Mammary epithelial cell (primary cell): ENCODE measurements at regions of chr4 and their contacts with region 1.

Region 1: DNA sequence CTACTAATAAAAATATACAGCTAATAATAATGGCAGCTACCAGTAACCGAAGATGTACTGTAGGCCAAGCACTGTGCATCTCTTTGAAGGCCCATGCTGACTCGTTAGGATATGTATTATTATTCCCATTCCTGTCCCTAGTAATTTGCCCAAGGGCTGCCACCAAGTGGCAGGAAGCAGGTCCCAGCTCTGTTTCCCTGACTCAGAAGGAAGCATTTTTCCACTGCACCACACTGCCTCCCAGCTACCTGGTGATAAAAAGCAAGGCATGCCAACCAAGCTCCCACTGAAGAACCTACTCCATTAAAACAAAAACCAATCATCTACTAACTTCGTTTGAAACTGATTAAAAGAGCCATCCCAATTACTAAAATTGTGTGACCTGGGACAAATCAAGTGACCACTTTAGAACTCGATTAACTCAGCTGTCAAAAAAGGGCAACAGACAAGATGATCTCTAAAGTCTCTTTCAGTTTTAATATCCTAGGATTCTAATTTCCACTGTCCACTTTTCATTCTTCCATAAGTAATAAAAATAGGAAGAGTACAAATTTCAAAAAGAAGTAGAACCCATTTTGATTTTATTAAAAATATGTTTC is 24.3 kb upstream of the PGM2 start:
- DNase-seq: peak; percentile 69
- H3K4me3 ChIP-seq: no peak overlapping the region
- H3K27ac ChIP-seq: no peak overlapping the region
- H3K4me1 ChIP-seq: no peaks in the 10 kb centered on the region
- H3K27me3 ChIP-seq: no peaks in the 10 kb centered on the region
- CTCF ChIP-seq: peak; percentile 66 to 83

Region 2: DNA sequence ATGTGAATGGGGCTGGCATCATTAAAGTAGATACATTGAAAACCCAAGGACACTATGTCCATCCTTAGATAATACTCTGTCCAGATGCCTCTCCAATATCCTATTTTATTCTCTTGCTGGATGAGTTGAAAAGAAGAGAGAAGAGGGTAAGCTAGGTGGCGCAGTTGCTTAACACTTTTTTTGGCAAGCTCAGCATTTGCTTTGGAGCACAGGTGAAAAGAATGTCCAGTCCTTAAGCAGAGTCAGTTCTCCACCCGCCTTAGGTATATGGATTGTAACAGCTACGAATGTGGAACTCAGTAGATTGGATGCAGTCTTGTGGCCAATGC is 349.3 kb before region 1 on chr4:
- CTCF ChIA-PET with region 1: interaction called, 4 read pairs
- dilution Hi-C with region 1: no loop called
- in situ Hi-C with region 1: loop called (anchors 10 to 25 kb)
- intact Hi-C with region 1: no loop called
- DNase-seq: peak; percentile 64
- H3K4me3 ChIP-seq: no peak overlapping the region
- H3K27ac ChIP-seq: no peak overlapping the region
- H3K4me1 ChIP-seq: peaks cover 9% of the 10 kb centered on the region
- H3K27me3 ChIP-seq: peaks cover 18% of the 10 kb centered on the region
- CTCF ChIP-seq: peak; percentile 60 to 80

Region 3: GRCh38 chr4:37742149-37742548 is 60.0 kb before region 1 on chr4:
- CTCF ChIA-PET with region 1: no interaction called
- dilution Hi-C with region 1: no loop called
- in situ Hi-C with region 1: no loop called
- intact Hi-C with region 1: loop called (anchors 2 kb)
- DNase-seq: peak; percentile 26
- H3K4me3 ChIP-seq: no peak overlapping the region
- H3K27ac ChIP-seq: no peak overlapping the region
- H3K4me1 ChIP-seq: peaks cover 4% of the 10 kb centered on the region
- H3K27me3 ChIP-seq: no peaks in the 10 kb centered on the region
- CTCF ChIP-seq: peak; percentile 15 to 37

Region 4: DNA sequence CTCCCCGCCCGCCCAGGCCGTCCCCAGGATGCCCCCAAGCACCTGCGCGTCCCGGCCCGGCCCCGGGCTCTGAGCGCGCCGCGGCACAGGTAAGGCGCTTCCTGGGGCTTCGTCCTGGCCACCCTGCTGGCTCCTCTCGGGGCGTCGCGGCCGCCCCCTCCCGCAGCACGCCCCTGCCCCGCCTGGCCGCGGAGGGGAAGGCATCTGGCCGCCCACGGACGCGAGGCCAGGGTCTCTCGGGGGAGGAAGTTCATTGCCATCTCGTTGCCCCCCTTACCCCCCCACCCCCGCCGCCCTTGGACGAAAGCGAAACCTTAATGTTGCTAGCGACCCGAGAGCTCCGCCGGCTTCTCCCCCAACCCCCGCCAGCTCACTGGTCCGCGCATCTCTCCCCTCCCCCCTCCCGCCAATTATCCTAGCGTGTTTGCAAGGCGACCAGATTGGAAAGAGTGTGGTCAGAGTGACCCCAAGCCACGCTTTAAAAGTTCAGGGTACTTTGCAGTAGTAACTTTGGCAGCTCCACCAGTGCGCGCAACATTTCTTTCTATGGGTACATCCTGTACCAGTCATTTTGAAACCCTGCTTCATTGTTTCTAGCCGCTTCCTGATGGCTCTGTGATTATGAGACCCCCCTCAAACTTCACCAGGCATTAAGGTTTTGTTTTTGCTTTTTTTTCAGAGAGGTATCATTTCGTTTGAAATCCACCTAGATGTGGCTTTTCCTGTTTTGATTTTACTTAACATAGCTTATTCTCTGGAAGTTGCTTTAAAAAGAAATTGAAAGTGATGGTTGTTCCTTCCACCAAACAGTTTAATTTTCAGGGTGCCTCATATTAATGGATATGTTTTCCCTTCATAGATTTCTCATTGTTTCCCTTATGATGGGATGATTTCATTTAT is 89.3 kb after region 1 on chr4:
- CTCF ChIA-PET with region 1: no interaction called
- dilution Hi-C with region 1: no loop called
- in situ Hi-C with region 1: no loop called
- intact Hi-C with region 1: loop called (anchors 2 kb)
- DNase-seq: peak; percentile 5
- H3K4me3 ChIP-seq: peak overlapping the region; percentile 52 to 57 (median 55)
- H3K27ac ChIP-seq: no peak overlapping the region
- H3K4me1 ChIP-seq: peaks cover 14% of the 10 kb centered on the region
- H3K27me3 ChIP-seq: peaks cover 11% of the 10 kb centered on the region
- CTCF ChIP-seq: no peak

Region 5: GRCh38 chr4:38034986-38035882 is 233.1 kb after region 1 on chr4:
- CTCF ChIA-PET with region 1: no interaction called
- dilution Hi-C with region 1: no loop called
- in situ Hi-C with region 1: loop called (anchors 5 to 10 kb)
- intact Hi-C with region 1: loop called (anchors 1 kb)
- DNase-seq: peak; percentile 30
- H3K4me3 ChIP-seq: no peak overlapping the region
- H3K27ac ChIP-seq: no peak overlapping the region
- H3K4me1 ChIP-seq: no peaks in the 10 kb centered on the region
- H3K27me3 ChIP-seq: no peaks in the 10 kb centered on the region
- CTCF ChIP-seq: peak; percentile 59 to 63